ENCODE measurements at regions of chr1 and their contacts with region 1.

Region 1: DNA sequence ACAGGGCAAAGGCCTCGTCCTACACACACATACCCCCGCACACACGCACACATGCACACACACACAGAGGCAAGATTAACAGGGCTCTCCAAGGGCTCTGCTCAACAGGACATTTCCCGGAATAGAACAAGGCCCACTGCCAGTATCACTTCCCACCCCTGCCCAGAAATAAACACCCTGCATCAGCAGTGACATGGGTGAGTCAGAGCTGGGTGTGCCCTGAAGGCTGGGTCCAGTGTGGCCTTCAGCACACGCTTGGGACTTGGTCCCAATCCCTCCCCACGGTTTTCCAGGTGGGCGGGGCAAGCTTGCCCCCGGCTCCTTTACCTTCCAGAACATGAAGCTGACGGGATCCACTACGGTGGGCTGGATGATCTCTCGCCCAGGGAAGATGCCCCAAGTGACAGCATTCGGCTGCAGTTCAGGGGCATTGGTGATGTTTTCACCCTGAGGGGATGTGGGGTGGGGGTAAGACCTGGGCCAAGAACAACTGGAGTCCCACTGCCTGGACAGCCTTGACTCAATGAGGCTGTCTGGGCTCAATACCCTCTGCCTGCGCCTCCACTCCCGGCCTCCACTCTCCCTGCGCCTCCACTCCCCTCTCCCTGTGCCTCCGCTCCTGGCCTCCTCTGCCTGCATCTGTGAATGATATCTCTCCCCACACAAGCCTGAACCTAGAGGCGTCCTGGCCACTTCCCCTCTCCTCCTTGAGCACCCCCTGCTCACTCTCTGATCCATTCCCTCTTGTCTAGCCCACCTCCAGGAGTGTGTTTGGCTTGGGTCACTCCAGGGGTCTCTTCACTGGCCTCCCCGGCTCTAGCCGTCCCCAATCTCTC is 14.7 kb downstream of the MTHFR start:
- DNase-seq: peak; percentile 90 to 93 (median 92)
- H3K4me3 ChIP-seq: peak overlapping the region in 1 of 3 experiments; percentile 31
- H3K4me3 Mint-ChIP-seq: peak overlapping the region; percentile 62 to 64
- H3K27ac ChIP-seq: peak overlapping the region; percentile 94 to 97
- H3K27ac Mint-ChIP-seq: peak overlapping the region; percentile 95 to 100 (median 99)
- H3K4me1 ChIP-seq: peaks cover 31 to 41% of the 10 kb centered on the region in 2 donors
- H3K4me1 Mint-ChIP-seq: peaks cover 41% of the 10 kb centered on the region
- H3K27me3 ChIP-seq: no peaks in the 10 kb centered on the region
- H3K27me3 Mint-ChIP-seq: peaks cover 0 to 2% (median 2%) of the 10 kb centered on the region in 3 donors
- CTCF ChIP-seq: no peak

Region 2: GRCh38 chr1:11078631-11079030 is 712.5 kb before region 1 on chr1:
- intact Hi-C with region 1: no loop called
- DNase-seq: no peak
- H3K4me3 ChIP-seq: no peak overlapping the region
- H3K4me3 Mint-ChIP-seq: no peak overlapping the region
- H3K27ac ChIP-seq: no peak overlapping the region
- H3K27ac Mint-ChIP-seq: peak overlapping the region in 1 of 7 donors; percentile 55
- H3K4me1 ChIP-seq: no peaks in the 10 kb centered on the region
- H3K4me1 Mint-ChIP-seq: no peaks in the 10 kb centered on the region
- H3K27me3 ChIP-seq: no peaks in the 10 kb centered on the region
- H3K27me3 Mint-ChIP-seq: peaks cover 0 to 4% (median 0%) of the 10 kb centered on the region in 3 donors
- CTCF ChIP-seq: no peak

Region 3: GRCh38 chr1:11805447-11806306 is 14.6 kb after region 1 on chr1 and contains the starts of genes CLCN6 and MTHFR:
- intact Hi-C with region 1: loop called in 1 of 2 experiments (anchors 2 kb)
- DNase-seq: peak; percentile 99
- H3K4me3 ChIP-seq: peak within 1 kb of the TSS; percentile 72 to 84 (median 83)
- H3K4me3 Mint-ChIP-seq: peak within 1 kb of the TSS; percentile 94 to 99
- H3K27ac ChIP-seq: peak within 1 kb of the TSS; percentile 87 to 98
- H3K27ac Mint-ChIP-seq: peak within 1 kb of the TSS; percentile 99 to 100 (median 99)
- H3K4me1 ChIP-seq: peaks cover 54 to 66% of the 10 kb centered on the region in 2 donors
- H3K4me1 Mint-ChIP-seq: peaks cover 71% of the 10 kb centered on the region
- H3K27me3 ChIP-seq: no peaks in the 10 kb centered on the region
- H3K27me3 Mint-ChIP-seq: peaks cover 0 to 2% (median 1%) of the 10 kb centered on the region in 3 donors
- CTCF ChIP-seq: no peak
- polyA plus RNA-seq, gene CLCN6: 3.8 to 37.1 (median 4.2) TPM
- polyA plus RNA-seq, gene MTHFR: 4.5 to 41.9 (median 8.5) TPM

Region 4: DNA sequence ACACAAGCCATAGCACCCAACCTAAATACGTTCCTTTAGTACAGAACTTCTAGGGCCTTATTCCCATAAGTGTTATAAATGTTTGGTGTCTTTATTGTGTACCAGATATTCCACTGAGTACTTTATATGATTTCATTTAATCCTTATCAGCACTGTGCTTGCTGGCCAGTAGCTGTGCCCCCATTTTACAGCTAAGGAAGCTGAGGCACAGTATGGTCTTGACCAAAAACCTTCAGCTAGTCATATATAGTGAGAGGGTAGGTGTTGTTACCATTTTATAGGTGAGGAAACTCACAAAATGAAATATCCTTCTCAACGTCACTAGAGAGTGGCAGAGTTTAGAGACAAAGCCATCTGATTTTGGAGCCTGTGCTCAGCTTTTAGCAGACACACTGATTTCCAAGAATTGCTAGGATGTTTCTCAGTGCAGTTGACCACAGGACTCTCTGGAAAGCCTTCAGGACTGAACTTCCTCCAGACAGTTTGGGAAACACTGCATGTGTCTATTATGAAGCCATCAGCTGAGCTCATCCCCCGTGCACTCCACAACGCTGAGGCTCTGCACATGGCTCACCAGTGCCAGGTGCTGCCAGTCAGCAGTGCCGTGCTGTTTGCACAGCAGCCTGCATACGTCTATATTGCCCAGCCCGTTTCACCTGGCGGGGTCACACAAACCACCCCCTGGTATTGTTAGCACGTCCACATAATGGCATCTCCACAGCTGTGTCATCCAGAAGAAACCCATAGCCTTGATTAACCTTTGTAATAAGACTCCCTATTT is 41.0 kb after region 1 on chr1:
- intact Hi-C with region 1: no loop called
- DNase-seq: no peak
- H3K4me3 ChIP-seq: no peak overlapping the region
- H3K4me3 Mint-ChIP-seq: no peak overlapping the region
- H3K27ac ChIP-seq: no peak overlapping the region
- H3K27ac Mint-ChIP-seq: no peak overlapping the region
- H3K4me1 ChIP-seq: no peaks in the 10 kb centered on the region
- H3K4me1 Mint-ChIP-seq: no peaks in the 10 kb centered on the region
- H3K27me3 ChIP-seq: no peaks in the 10 kb centered on the region
- H3K27me3 Mint-ChIP-seq: peaks cover 0 to 2% (median 0%) of the 10 kb centered on the region in 3 donors
- CTCF ChIP-seq: no peak

Region 5: GRCh38 chr1:11845641-11846335 is 54.7 kb after region 1 on chr1:
- intact Hi-C with region 1: no loop called
- DNase-seq: no peak
- H3K4me3 ChIP-seq: no peak overlapping the region
- H3K4me3 Mint-ChIP-seq: no peak overlapping the region
- H3K27ac ChIP-seq: no peak overlapping the region
- H3K27ac Mint-ChIP-seq: no peak overlapping the region
- H3K4me1 ChIP-seq: peaks cover 36 to 42% of the 10 kb centered on the region in 2 donors
- H3K4me1 Mint-ChIP-seq: peaks cover 40% of the 10 kb centered on the region
- H3K27me3 ChIP-seq: no peaks in the 10 kb centered on the region
- H3K27me3 Mint-ChIP-seq: peaks cover 0 to 1% (median 0%) of the 10 kb centered on the region in 3 donors
- CTCF ChIP-seq: no peak

Measured in CD14-positive monocyte (primary cell).